Naive thymus-derived CD8-positive, alpha-beta T cell (primary cell): ENCODE measurements at regions of chr17 and their contacts with region 1.

Region 1: DNA sequence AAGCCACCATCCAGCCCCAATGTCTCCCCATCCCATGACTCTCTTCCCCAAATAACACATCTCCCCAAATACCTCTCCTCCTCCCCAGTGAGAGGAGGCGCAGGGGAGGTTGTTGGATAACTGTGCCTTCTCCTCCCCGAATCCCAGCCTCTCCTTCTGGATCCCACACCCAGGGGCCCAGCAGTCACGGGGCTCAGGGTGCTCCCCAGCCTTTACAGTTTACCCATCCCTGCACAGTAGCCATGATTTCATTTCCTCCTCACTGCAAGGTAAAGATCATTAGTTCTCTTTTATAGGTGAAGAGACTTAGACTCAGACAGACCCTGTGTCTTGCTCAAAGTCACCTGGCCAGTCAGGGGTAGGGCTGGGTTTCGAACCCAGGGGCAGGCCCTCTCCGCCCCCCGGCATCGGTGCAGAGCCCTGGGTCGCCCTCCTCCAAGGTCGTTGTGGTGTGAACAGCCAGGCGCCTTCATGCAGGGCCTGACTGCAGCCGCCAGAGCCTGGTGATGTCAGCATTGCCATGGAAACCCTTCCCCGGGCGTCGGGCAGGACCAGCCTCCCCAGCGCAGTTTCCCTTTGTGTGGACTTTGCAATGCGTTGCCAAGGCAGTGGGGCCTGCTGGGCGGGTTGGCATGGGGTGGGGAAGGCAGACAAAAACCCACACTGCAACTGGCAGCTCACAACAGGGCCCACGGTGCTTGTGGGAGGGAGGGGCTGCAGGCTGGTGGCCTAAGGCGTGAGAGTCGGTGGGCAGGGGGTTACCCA is 53.3 kb upstream of the TOB1 start:
- DNase-seq: peak; percentile 62 to 98 (median 90)
- ATAC-seq: peak; percentile 89 to 90
- H3K4me3 Mint-ChIP-seq: peak overlapping the region; percentile 66 to 92 (median 82)
- H3K27ac Mint-ChIP-seq: peak overlapping the region; percentile 97 to 100 (median 99)
- H3K4me1 Mint-ChIP-seq: peaks cover 31 to 71% (median 60%) of the 10 kb centered on the region in 4 donors
- H3K27me3 Mint-ChIP-seq: no peaks in the 10 kb centered on the region

Region 2: GRCh38 chr17:50944054-50944901 is 24.8 kb after region 1 on chr17:
- POLR2A ChIA-PET with region 1: interaction called, 103 read pairs
- DNase-seq: peak; percentile 54 to 89 (median 74)
- ATAC-seq: peak; percentile 87
- H3K4me3 Mint-ChIP-seq: peak overlapping the region; percentile 77 to 89 (median 84)
- H3K27ac Mint-ChIP-seq: peak overlapping the region; percentile 91 to 96 (median 94)
- H3K4me1 Mint-ChIP-seq: peaks cover 31 to 62% (median 52%) of the 10 kb centered on the region in 4 donors
- H3K27me3 Mint-ChIP-seq: no peaks in the 10 kb centered on the region

Region 3: DNA sequence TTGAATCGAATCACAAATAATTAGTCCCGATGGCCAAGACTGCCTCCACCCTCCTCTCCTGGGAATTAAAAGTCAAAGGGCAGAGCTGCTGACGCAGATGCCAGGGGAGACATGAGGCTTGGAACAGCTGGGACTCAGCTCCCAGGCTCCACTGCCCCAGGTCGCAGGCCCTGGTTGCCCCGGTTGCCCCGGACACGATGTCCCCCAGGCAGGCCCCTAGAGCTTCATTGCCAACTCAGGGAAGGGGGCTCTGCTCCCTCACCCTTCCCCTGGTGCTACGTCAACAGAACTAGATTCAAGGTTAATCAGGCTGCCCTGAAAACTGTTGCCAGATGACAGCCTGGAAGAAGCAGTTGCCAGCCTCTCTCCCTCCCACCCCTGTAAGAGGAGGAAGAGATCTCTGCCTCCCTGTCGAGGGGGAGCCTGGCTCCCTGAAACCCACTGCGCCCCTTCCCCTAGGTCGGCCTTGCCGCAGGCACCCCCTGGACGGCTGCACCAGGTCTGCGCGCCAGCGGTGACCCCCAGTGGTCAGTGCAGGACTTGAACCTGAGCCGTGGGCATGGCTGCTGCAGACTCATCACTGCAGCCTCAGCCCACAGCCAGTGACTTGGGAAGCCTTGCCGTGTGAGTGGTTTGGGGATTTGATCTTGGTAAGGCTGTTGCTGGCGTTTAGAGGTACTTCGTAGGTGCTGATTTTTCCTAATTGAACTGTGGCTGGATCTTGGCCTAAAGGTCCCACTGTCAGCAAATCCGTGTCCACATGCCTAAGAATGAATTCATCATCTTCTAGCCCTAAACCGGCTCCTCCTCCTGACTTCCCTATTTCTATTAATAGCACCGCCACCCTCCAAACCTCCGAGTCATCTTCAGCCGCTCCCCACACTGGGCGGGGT is 30.7 kb after region 1 on chr17:
- POLR2A ChIA-PET with region 1: interaction called, 103 read pairs
- DNase-seq: peak; percentile 34 to 84 (median 50)
- ATAC-seq: peak; percentile 92 to 95
- H3K4me3 Mint-ChIP-seq: peak overlapping the region in 3 of 10 donors; percentile 33 to 54 (median 45)
- H3K27ac Mint-ChIP-seq: peak overlapping the region in 9 of 10 donors; percentile 49 to 90 (median 70)
- H3K4me1 Mint-ChIP-seq: peaks cover 15 to 41% (median 36%) of the 10 kb centered on the region in 4 donors
- H3K27me3 Mint-ChIP-seq: no peaks in the 10 kb centered on the region